BJ (cell line): ENCODE measurements at regions of chr5 and their contacts with region 1.

Region 1: DNA sequence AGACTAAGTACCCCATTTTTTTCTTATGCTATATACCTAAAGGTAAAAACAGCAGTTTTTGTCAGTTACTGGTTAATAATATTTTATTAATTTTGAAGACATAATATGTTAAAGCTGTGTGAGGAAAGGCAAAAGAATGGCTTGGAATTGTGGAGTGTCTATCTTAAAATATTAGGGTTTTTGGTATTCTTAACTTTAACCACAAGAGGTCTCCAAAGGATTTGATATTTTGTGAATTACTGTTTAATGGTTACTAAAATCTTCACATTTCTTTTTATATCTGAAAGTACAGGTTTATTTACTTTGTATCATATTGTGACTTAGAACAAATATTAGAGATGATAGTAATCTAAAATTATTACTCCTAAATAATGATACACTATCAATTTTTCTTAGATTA is 32.0 kb upstream of the DHFR start:
- DNase-seq: no peak
- H3K4me3 ChIP-seq: no peak overlapping the region
- H3K27me3 ChIP-seq: no peaks in the 10 kb centered on the region
- CTCF ChIP-seq: peak; percentile 37; the same call in 1 of the 2 replicates

Region 2: GRCh38 chr5:80672140-80672736 is 14.5 kb before region 1 on chr5:
- CTCF ChIA-PET with region 1: interaction called, 24 read pairs
- POLR2A ChIA-PET with region 1: no interaction called
- DNase-seq: no peak
- H3K4me3 ChIP-seq: no peak overlapping the region
- H3K27me3 ChIP-seq: no peaks in the 10 kb centered on the region
- CTCF ChIP-seq: peak; percentile 84

Region 3: DNA sequence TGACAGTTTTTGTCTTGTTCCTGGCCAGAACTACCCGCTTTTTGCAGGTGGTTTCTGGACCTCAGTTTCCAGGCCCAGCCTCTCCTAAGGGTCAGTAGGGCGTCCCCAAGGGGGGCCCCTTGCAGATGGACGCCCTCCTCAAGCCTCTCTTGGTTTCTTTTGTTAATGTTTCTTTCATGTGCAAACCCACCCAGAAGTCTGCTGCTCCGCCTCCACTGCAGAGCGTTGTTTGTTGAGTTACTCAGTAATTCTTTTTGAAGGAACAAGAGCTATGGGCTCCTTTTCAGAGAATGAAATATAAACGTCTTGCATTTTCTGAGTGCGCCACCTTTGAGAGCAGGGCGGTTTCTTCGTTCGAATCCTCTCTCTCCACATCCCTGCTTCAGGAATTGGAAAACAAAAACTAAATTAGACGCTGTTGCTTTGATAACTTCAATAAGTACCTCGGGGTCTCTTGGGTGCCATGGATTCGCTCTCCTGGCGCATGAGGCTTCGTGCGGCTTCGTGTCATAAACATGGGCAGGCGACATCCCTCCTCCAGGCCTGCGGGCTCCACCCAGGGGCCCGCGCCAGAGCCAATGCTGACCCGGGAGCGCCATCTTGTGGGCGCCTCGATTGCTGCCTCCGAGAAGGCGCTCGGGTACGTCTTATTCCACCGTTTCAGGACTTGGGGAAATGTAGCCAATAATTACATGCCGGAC is 508.0 kb after region 1 on chr5:
- CTCF ChIA-PET with region 1: interaction called, 17 read pairs
- POLR2A ChIA-PET with region 1: no interaction called
- DNase-seq: peak; percentile 19
- H3K4me3 ChIP-seq: no peak overlapping the region
- H3K27me3 ChIP-seq: no peaks in the 10 kb centered on the region; the same call in 1 of the 2 replicates
- CTCF ChIP-seq: peak; percentile 98